Naive thymus-derived CD4-positive, alpha-beta T cell (primary cell): ENCODE measurements at regions of chr20 and their contacts with region 1.

Region 1: DNA sequence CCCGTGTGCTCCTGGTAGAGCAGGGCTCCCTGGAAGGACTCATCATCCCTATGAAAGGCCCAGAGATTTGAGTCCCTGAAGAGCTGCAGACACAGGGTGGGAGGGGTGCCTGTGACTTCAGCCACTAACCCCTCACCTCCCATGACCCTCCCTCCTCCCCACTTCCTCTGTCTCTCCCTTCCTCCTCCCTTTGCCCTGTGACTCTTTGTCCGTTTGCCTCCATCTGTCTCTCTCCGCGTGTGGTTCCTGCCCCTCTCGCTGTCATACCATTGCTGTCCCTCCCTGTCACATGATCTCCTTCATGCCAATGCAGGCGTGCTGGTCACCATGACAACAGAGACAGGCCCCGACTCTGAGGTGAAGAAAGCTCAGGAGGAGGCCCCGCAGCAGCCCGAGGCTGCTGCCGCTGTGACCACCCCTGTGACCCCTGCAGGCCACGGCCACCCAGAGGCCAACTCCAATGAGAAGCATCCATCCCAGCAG is 19.0 kb downstream of the EPB41L1 start:
- DNase-seq: peak in 2 of 9 donors; percentile 17 to 20
- ATAC-seq: peak; percentile 57
- H3K4me3 ChIP-seq: no peak overlapping the region
- H3K4me3 Mint-ChIP-seq: peak overlapping the region in 2 of 10 donors; percentile 1 to 37
- H3K27ac ChIP-seq: no peak overlapping the region
- H3K27ac Mint-ChIP-seq: no peak overlapping the region
- H3K4me1 ChIP-seq: no peaks in the 10 kb centered on the region
- H3K4me1 Mint-ChIP-seq: peaks cover 0 to 10% (median 5%) of the 10 kb centered on the region in 7 donors
- H3K27me3 ChIP-seq: no peaks in the 10 kb centered on the region
- H3K27me3 Mint-ChIP-seq: peaks cover 0 to 9% (median 0%) of the 10 kb centered on the region in 5 donors

Region 2: DNA sequence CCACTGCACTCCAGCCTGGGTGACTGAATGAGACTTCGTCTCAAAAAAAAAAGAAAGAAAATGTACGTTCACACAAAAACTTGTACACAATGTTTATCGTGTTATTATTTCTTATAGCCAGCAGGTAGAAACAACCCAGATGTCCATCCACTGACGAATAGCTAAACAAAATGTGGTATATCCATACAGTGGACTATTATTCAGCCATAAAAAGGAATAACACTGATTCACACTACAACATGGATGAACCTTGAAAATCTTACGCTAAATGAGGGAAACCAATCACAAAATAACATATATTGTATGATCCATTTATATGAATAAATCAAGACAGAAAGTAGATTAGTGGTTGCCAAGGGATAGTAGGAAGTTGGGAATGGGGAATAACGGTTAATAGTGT is 94.0 kb before region 1 on chr20:
- CTCF ChIA-PET with region 1: no interaction called
- POLR2A ChIA-PET with region 1: interaction called, 10 read pairs
- intact Hi-C with region 1: no loop called
- DNase-seq: no peak
- ATAC-seq: no peak
- H3K4me3 ChIP-seq: no peak overlapping the region
- H3K4me3 Mint-ChIP-seq: no peak overlapping the region
- H3K27ac ChIP-seq: no peak overlapping the region
- H3K27ac Mint-ChIP-seq: no peak overlapping the region
- H3K4me1 ChIP-seq: no peaks in the 10 kb centered on the region
- H3K4me1 Mint-ChIP-seq: peaks cover 0 to 4% (median 0%) of the 10 kb centered on the region in 7 donors
- H3K27me3 ChIP-seq: no peaks in the 10 kb centered on the region
- H3K27me3 Mint-ChIP-seq: peaks cover 7 to 25% (median 12%) of the 10 kb centered on the region in 5 donors

Region 3: DNA sequence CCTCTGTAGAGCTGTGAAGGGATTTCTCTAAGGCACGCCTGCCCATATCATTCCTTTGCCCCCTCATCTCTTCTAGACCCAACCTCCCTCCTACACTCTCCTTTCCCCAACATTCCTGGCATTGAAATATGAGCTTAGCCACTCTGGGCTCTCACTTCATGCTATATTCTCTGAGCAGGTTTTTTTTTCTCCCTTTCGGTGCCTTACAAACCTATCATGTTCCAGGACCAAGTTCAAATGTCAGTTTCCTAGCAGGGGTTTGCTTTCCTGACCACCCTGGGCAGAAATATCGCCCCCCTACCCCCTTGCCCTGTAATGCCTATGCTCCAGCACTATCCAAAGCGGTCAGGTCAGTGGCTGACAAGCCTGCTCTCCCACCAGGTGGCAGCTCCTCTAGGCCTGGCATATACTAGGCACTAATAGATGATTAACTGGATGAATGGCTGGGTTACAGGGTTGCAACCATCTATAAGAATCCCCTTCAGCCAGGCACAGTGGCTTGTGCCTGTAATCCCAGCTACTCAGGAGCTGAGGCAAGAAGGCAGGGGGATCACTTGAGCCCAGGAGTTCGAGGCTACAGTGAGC is 37.0 kb after region 1 on chr20:
- CTCF ChIA-PET with region 1: no interaction called
- POLR2A ChIA-PET with region 1: no interaction called
- intact Hi-C with region 1: no loop called
- DNase-seq: no peak
- ATAC-seq: no peak
- H3K4me3 ChIP-seq: no peak overlapping the region
- H3K4me3 Mint-ChIP-seq: no peak overlapping the region
- H3K27ac ChIP-seq: no peak overlapping the region
- H3K27ac Mint-ChIP-seq: peak overlapping the region in 1 of 9 donors; percentile 13
- H3K4me1 ChIP-seq: no peaks in the 10 kb centered on the region
- H3K4me1 Mint-ChIP-seq: no peaks in the 10 kb centered on the region
- H3K27me3 ChIP-seq: no peaks in the 10 kb centered on the region
- H3K27me3 Mint-ChIP-seq: peaks cover 0 to 4% (median 0%) of the 10 kb centered on the region in 5 donors